Dendritic cell treated with granulocyte-macrophage colony-stimulating factor and Interleukin-4, amounts not matched to agents 40 ng/mL and 50 ng/mL, for 4 days (primary cell): ENCODE measurements at regions of chr16 and their contacts with region 1.

Region 1: DNA sequence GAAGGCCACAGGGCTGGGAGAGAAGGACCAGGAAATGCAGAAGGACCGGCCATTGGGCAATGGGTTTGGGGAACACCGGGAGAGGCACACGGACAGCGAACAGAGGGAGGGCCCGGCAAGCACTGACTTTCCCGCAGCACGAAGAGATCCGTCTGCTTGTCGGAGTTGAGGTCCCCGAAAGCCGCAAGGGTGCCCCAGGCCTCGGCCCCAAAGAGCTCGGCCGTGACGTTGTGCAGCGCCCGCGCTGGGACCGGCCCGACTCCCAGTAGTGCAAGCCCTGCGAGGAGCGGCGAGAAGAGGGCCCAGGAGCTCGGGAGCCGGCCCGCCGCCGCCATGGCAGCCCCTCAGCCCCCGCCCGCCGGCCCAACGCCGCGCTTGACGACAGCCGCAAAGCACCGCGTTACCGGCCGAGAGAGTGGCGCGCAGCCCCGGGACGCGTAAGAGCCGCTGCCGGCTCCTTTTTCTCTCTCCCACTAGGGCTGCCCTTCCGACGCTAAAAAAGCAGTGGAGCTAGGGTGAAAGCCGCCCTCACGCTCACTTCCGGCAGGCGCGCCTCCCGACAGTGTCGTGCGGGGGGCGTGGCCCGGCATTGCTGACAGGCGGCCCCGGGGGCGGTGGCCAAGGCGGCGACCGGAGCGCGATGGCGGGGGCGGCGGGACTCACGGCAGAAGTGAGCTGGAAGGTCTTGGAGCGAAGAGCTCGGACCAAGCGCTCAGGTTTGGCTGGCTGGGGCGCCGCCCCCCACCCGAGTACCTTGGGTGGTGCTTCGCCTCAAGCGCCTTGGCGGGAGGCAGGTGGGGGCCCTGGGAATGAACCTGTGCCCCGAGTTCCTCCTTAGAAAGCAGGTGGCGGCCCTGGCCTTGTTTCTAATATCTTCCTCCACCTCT is at the starts of genes ITFG1 and PHKB:
- H3K4me3 Mint-ChIP-seq: peak within 1 kb of the TSS; percentile 92
- H3K27ac Mint-ChIP-seq: peak within 1 kb of the TSS; percentile 96
- H3K4me1 Mint-ChIP-seq: peaks cover 51% of the 10 kb centered on the region
- H3K27me3 Mint-ChIP-seq: no peaks in the 10 kb centered on the region

Region 2: DNA sequence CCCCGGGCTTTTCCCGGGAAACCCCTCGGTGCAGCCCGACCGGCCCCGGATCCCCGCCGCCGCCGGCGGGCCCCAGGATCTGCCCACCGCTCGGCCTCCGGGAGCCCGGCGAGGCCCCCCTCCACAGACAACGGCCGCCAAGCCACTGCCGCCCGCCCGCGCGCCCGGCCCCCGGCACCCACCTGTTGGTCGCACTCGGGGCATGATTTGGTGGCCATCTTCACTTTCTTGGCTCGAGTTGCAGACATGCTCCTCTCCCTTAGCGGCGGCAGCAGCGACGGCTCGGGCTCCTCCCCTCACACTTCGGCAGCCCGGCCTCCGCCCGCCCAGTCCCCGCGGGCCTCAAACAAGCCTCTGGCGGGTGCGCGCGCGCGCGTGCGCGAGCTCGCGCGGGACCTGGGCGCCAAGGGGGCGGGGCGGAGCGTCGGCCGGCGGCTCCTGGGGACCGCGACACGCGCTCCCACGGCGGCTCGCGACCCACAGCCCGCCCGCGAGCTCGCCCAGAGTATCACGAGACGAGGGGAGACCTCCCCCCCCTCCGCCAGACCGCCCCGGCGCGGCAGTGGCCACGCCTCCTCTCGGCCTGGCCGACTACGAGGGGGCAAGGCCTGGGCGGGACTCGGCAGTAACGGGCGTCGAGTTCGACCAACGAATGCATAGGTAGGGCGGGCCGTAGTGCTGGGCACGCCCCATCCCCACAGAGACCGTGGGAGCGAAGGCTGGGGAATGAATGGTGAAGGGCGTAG is 629.9 kb before region 1 on chr16 and contains the start of gene C16orf87:
- intact Hi-C with region 1: loop called (anchors 2 kb)
- H3K4me3 Mint-ChIP-seq: peak within 1 kb of the TSS; percentile 82
- H3K27ac Mint-ChIP-seq: peak within 1 kb of the TSS; percentile 88
- H3K4me1 Mint-ChIP-seq: peaks cover 19% of the 10 kb centered on the region
- H3K27me3 Mint-ChIP-seq: no peaks in the 10 kb centered on the region

Region 3: GRCh38 chr16:47299587-47299986 is 161.4 kb before region 1 on chr16:
- intact Hi-C with region 1: no loop called
- H3K4me3 Mint-ChIP-seq: no peak overlapping the region
- H3K27ac Mint-ChIP-seq: no peak overlapping the region
- H3K4me1 Mint-ChIP-seq: peaks cover 6% of the 10 kb centered on the region
- H3K27me3 Mint-ChIP-seq: no peaks in the 10 kb centered on the region

Region 4: DNA sequence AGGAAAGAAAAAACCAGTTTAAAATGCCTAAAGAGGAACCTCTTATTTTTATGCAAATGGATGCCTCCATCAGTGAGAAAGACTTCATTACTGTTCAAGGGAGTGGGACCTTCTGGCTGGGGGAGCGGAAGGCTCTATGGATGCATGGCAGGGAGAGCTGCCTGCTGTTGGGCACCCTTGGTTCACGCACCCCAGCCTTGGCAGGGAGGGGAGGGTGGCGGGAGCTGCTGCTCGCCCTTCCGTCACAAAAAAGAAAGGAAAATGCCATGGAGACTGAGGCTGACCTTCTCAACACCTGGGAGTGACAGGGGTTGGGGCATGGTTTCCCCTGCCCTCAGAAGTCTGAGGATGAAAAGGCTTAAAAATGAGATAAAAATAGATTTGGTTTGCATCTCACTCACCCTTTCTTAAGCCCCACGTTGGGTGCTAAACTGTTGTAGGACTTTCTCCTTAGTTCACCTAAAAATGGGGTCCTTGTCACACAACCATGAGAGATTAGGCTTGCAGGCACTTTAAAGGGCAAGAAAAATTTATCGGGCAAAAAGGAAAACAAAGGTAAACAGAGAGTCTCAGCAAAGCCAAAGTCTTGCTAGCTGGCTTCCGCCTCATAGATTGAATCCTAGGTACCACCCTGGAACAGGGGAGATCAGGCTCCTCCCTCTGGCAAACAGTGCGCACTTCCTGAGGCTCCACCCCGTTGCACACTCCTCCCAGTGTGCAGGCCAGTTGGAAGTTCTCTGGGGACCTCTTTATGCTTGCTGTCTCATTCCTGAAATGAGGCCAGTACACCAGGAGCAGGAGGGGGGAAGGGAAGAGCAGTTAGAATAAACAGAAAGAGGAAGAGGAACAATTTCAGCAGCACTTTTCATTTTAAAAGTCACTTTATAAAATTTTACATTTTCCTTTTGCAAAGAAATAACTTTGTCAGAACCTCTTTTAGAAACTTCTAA is 31.7 kb after region 1 on chr16:
- intact Hi-C with region 1: loop called (anchors 1 kb)
- H3K4me3 Mint-ChIP-seq: peak overlapping the region; percentile 71
- H3K27ac Mint-ChIP-seq: peak overlapping the region; percentile 89
- H3K4me1 Mint-ChIP-seq: peaks cover 29% of the 10 kb centered on the region
- H3K27me3 Mint-ChIP-seq: no peaks in the 10 kb centered on the region

Region 5: DNA sequence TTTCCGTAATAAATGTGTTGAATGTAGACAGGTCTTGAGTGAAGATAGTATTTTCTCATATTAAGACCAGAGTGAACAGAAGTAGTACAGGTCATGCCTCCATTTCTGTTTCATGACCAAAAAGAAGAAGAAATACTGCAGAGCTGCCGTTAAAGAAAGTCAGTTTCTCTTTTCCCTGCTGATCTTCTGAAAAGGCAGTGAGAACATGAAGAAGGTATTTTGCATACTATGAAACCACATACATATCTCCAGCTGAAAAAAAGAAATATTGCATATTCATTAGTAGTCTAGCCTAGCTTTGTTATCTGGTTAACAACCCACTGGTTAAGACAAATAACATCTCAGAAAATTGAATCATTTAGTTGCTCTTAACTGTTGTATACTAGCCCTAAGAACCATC is 138.6 kb after region 1 on chr16:
- intact Hi-C with region 1: loop called (anchors 10 kb)
- H3K4me3 Mint-ChIP-seq: no peak overlapping the region
- H3K27ac Mint-ChIP-seq: no peak overlapping the region
- H3K4me1 Mint-ChIP-seq: no peaks in the 10 kb centered on the region
- H3K27me3 Mint-ChIP-seq: no peaks in the 10 kb centered on the region

Region 6: DNA sequence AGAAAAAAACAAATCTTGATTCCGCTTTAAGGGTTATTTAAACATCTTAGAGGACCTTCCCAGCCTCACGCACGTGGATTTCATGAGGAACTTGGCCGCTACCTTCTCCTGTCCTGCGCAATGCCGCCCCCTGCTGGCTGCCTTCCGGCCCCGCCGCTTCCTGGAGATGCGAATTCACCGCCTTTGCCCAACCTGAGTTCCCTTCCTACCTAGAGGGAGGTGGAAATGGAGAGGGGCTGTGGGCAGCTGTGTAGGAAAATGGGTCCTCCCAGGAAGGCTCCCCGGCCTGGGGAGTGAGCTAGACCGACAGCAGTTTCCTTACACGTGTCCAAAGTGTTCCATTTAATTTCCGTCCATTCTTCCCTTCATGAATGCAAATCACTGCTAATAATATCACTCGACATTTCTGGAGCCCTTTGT is 695.8 kb after region 1 on chr16:
- intact Hi-C with region 1: no loop called
- H3K4me3 Mint-ChIP-seq: no peak overlapping the region
- H3K27ac Mint-ChIP-seq: no peak overlapping the region
- H3K4me1 Mint-ChIP-seq: peaks cover 5% of the 10 kb centered on the region
- H3K27me3 Mint-ChIP-seq: peaks cover 35% of the 10 kb centered on the region